Activated CD4-positive, alpha-beta T cell treated with anti-CD3 and anti-CD28 coated beads for 36 hours (primary cell): ENCODE measurements at regions of chr13 and their contacts with region 1.

Region 1: GRCh38 chr13:20773194-20774080 is at the start of gene EEF1AKMT1:
- DNase-seq: peak; percentile 98
- ATAC-seq: peak; percentile 92
- H3K4me3 Mint-ChIP-seq: peak within 1 kb of the TSS; percentile 93
- H3K27ac Mint-ChIP-seq: peak within 1 kb of the TSS; percentile 100
- H3K4me1 Mint-ChIP-seq: peaks cover 45% of the 10 kb centered on the region
- H3K27me3 Mint-ChIP-seq: no peaks in the 10 kb centered on the region
- total RNA-seq, gene EEF1AKMT1: 21.0 to 23.9 TPM

Region 2: DNA sequence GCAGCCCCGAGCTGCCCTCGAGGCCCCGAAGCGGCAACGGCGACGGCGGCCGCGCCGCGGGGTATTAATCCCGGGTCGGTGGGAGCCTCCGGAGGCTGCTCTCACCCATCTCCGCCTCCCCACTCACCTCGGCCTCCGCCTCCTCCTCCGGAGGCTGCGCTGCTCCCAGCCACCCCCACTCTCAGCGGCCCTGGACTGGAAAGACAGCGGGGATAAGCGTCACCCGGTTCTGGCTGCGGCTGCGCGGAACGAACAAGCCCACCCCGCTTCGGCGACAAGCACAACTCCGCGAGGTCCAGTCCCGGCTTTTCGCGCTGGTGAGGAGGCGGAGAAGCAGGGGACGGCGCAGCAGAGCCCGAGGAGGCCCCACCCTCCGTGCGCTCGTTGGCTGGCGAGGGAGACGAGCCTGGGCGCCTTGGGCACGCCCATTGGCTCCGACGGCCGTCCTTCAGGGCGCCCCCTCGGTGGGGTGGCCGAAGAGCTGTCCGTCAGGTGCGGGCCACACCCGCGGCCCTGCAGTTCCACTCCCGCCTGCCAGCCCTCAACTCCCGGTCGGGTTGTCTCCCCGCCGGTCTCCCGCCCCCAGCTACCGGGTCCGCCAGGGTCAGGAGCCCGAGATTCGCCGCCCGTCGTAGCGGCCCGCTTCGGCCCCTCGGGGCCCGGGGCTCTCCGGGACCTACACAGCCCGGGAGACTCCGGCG is 910.0 kb before region 1 on chr13 and contains the start of gene ZMYM5:
- CTCF ChIA-PET with region 1: no interaction called
- POLR2A ChIA-PET with region 1: no interaction called
- intact Hi-C with region 1: loop called in 1 of 2 experiments (anchors 5 kb)
- DNase-seq: peak; percentile 98
- ATAC-seq: peak; percentile 90
- H3K4me3 Mint-ChIP-seq: peak within 1 kb of the TSS; percentile 94
- H3K27ac Mint-ChIP-seq: peak within 1 kb of the TSS; percentile 97
- H3K4me1 Mint-ChIP-seq: peaks cover 41% of the 10 kb centered on the region
- H3K27me3 Mint-ChIP-seq: no peaks in the 10 kb centered on the region
- total RNA-seq, gene ZMYM5: 9.1 to 10.1 TPM

Region 3: DNA sequence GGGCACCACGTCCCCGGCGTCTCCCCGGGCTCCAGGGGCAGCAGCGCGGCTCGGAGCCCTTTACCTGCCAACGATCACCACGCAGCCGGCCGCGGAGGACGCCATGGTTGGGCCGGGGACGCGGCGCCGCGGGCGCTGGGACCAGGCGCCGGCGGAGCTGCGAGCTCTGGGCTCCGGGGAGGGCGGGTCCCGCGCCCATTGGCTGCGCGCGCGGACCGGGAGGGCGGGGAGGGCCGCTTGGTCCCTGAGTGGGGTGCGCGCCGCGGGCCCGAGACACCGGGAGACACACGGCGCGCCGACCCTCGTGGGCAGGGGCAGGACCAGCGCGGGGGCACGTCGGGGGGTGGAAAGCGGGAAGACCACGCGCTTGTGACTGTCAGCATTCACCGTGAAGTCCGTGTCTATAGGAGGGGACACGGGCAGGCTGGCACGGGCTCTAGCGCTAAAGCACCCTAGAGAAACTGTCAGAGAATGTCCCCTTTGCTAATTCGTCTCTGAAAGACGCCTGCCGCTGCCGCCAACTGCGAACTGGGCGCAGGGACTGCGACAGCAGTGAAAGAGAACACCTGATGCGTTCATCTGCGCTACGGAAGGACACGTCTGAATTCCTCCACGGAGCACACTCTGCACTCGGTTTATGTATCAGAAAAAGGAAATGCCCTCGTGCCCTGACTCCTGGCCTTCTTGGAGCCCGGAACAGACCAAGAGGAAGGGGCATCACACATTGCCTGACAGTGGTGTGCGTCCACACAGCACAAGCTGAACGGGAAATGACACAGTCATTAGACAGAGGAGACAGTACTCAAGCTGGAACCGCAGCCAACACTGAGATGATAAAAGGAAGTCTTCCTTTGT is 247.5 kb before region 1 on chr13 and contains the start of gene CRYL1:
- CTCF ChIA-PET with region 1: no interaction called
- POLR2A ChIA-PET with region 1: no interaction called
- intact Hi-C with region 1: loop called in 1 of 2 experiments (anchors 2 kb)
- DNase-seq: peak; percentile 81
- ATAC-seq: peak; percentile 86
- H3K4me3 Mint-ChIP-seq: peak within 1 kb of the TSS; percentile 86
- H3K27ac Mint-ChIP-seq: peak within 1 kb of the TSS; percentile 99
- H3K4me1 Mint-ChIP-seq: peaks cover 30% of the 10 kb centered on the region
- H3K27me3 Mint-ChIP-seq: no peaks in the 10 kb centered on the region
- total RNA-seq, gene CRYL1: 8.5 to 9.1 TPM

Region 4: DNA sequence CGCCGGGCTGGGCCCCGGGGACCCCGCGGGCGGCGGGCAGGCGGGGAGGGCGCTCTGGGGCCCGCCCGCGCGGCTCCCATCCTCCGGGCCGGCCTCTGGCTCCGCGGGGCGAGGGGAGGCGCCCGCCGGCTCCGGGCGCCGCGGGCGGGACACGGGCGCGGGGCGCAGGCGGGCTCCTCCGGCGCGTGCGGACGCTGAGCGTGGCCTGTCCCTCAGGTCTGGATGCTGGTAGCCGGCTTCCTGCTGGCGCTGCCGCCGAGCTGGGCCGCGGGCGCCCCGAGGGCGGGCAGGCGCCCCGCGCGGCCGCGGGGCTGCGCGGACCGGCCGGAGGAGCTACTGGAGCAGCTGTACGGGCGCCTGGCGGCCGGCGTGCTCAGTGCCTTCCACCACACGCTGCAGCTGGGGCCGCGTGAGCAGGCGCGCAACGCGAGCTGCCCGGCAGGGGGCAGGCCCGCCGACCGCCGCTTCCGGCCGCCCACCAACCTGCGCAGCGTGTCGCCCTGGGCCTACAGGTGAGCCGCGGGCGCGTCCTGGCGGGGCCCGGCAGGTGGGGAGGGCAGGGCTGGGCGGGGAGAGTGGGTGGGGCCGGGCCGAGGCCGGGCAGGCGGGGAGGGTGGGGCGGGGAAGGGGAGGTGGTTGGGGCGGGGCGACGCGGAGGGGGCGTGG is 69.5 kb before region 1 on chr13:
- CTCF ChIA-PET with region 1: interaction called, 3 read pairs
- POLR2A ChIA-PET with region 1: no interaction called
- intact Hi-C with region 1: loop called (anchors 1 to 5 kb)
- DNase-seq: peak; percentile 87
- ATAC-seq: peak; percentile 89
- H3K4me3 Mint-ChIP-seq: peak overlapping the region; percentile 58
- H3K27ac Mint-ChIP-seq: no peak overlapping the region
- H3K4me1 Mint-ChIP-seq: peaks cover 13% of the 10 kb centered on the region
- H3K27me3 Mint-ChIP-seq: peaks cover 21% of the 10 kb centered on the region

Region 5: GRCh38 chr13:20801707-20802106 is 28.3 kb after region 1 on chr13:
- CTCF ChIA-PET with region 1: no interaction called
- POLR2A ChIA-PET with region 1: no interaction called
- intact Hi-C with region 1: no loop called
- DNase-seq: no peak
- ATAC-seq: no peak
- H3K4me3 Mint-ChIP-seq: no peak overlapping the region
- H3K27ac Mint-ChIP-seq: peak overlapping the region; percentile 67
- H3K4me1 Mint-ChIP-seq: peaks cover 27% of the 10 kb centered on the region
- H3K27me3 Mint-ChIP-seq: no peaks in the 10 kb centered on the region

Region 6: DNA sequence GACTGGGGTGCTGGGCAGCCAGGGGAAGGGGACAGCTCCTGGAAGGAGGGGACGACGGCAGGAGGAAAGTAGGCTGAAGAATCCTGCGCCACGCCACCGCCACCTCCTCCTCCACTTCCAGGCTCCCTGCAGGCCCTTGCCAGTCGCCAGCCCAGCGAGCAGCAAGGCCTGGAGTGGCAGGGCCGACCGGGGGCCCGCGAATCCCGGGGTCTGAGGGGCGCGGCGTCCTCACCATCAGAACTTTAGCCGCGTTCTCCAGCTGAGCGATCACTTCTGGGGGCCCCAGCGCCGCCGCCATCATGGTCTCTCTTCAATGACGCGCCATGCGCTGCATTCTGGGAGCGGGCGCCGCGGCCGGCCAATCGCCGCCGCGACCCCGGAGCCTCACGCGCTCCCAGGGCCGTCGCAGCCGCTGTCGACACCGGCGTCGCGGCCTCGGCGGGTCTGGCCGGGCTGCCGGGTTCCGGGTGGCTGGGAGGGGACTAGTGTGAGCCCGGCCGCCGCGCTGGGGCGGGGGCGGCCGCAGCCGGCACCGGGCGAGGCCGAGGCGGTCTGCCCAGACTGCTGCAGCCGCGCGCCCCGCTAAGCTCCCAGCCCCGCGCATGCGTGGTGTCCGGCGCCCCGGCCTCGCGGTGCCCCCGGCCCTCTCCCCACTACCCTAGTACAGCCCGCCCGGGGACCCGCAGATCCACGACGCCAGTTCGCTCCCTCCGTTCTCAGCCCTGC is 129.2 kb after region 1 on chr13 and contains the start of gene XPO4:
- CTCF ChIA-PET with region 1: interaction called, 3 read pairs
- POLR2A ChIA-PET with region 1: no interaction called
- intact Hi-C with region 1: loop called (anchors 1 kb)
- DNase-seq: peak; percentile 91
- ATAC-seq: peak; percentile 94
- H3K4me3 Mint-ChIP-seq: peak within 1 kb of the TSS; percentile 91
- H3K27ac Mint-ChIP-seq: peak within 1 kb of the TSS; percentile 92
- H3K4me1 Mint-ChIP-seq: peaks cover 32% of the 10 kb centered on the region
- H3K27me3 Mint-ChIP-seq: no peaks in the 10 kb centered on the region
- total RNA-seq, gene XPO4: 22.8 to 26.4 TPM

Region 7: DNA sequence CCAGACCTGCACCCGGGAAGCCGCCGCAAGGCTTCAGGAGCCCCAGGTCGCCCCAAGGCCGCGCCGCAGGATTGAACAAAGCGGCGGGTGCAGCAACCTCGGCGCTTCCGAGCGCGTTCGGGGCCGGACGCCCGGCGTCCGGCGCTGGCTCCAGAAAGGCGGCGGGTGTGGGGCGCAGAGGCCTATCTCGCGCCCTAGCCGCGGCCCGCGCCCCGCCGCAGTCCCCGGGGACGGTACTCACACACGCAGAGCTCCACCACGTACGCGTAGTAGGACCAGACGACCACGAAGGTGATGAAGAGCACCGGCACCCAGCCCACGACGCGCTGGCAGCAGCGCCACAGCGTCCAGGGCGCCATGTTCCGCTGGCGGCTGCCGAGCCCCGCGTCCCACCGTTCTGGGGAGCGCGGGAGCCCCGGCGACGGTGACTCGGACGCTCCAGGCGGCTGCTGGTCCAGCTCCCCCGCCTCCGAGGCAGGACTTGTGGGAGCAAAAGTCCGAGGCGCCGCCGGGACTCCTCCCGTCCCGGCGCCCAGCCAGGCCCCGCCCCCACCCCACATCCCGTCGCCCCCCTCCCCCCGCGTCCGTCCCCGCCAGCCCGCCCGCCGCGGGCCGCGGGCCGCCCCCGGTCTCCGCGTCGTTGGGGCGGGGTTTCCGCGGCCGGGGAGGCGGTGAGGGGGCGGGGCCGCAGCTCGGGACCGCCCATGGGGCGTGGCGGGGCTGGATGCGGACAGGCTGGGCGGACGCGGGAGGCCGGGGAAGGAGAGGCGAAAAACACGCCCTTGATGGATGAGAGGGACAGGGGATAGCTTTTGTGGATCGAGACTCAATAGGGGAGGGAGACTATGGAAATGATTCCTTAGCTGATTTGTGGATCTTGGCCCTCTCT is 685.6 kb after region 1 on chr13 and contains the start of gene ZDHHC20:
- CTCF ChIA-PET with region 1: no interaction called
- POLR2A ChIA-PET with region 1: no interaction called
- intact Hi-C with region 1: loop called in 1 of 2 experiments (anchors 1 kb)
- DNase-seq: peak; percentile 93
- ATAC-seq: peak; percentile 83
- H3K4me3 Mint-ChIP-seq: peak within 1 kb of the TSS; percentile 93
- H3K27ac Mint-ChIP-seq: peak within 1 kb of the TSS; percentile 88
- H3K4me1 Mint-ChIP-seq: peaks cover 25% of the 10 kb centered on the region
- H3K27me3 Mint-ChIP-seq: no peaks in the 10 kb centered on the region
- total RNA-seq, gene ZDHHC20: 40.2 to 44.9 TPM

Region 8: GRCh38 chr13:21733475-21734263 is 960.2 kb after region 1 on chr13:
- CTCF ChIA-PET with region 1: no interaction called
- POLR2A ChIA-PET with region 1: no interaction called
- intact Hi-C with region 1: no loop called
- DNase-seq: no peak
- ATAC-seq: no peak
- H3K4me3 Mint-ChIP-seq: no peak overlapping the region
- H3K27ac Mint-ChIP-seq: no peak overlapping the region
- H3K4me1 Mint-ChIP-seq: no peaks in the 10 kb centered on the region
- H3K27me3 Mint-ChIP-seq: peaks cover 7% of the 10 kb centered on the region